ENCODE measurements at regions of chr5 and their contacts with region 1.

Region 1: GRCh38 chr5:147628058-147628895 is 118.4 kb upstream of the DPYSL3 start:
- DNase-seq: no peak
- H3K4me3 ChIP-seq: no peak overlapping the region
- H3K27ac ChIP-seq: no peak overlapping the region
- H3K4me1 ChIP-seq: peaks cover 0 to 4% (median 0%) of the 10 kb centered on the region in 4 donors
- H3K27me3 ChIP-seq: no peaks in the 10 kb centered on the region
- CTCF ChIP-seq: peak; percentile 69 to 78 (median 75)
- EP300 ChIP-seq: no peak
- POLR2A ChIP-seq: no peak

Region 2: GRCh38 chr5:147727200-147727599 is 98.9 kb after region 1 on chr5:
- intact Hi-C with region 1: no loop called
- DNase-seq: no peak
- H3K4me3 ChIP-seq: no peak overlapping the region
- H3K27ac ChIP-seq: no peak overlapping the region
- H3K4me1 ChIP-seq: no peaks in the 10 kb centered on the region
- H3K27me3 ChIP-seq: no peaks in the 10 kb centered on the region
- CTCF ChIP-seq: no peak
- EP300 ChIP-seq: no peak
- POLR2A ChIP-seq: no peak

Region 3: DNA sequence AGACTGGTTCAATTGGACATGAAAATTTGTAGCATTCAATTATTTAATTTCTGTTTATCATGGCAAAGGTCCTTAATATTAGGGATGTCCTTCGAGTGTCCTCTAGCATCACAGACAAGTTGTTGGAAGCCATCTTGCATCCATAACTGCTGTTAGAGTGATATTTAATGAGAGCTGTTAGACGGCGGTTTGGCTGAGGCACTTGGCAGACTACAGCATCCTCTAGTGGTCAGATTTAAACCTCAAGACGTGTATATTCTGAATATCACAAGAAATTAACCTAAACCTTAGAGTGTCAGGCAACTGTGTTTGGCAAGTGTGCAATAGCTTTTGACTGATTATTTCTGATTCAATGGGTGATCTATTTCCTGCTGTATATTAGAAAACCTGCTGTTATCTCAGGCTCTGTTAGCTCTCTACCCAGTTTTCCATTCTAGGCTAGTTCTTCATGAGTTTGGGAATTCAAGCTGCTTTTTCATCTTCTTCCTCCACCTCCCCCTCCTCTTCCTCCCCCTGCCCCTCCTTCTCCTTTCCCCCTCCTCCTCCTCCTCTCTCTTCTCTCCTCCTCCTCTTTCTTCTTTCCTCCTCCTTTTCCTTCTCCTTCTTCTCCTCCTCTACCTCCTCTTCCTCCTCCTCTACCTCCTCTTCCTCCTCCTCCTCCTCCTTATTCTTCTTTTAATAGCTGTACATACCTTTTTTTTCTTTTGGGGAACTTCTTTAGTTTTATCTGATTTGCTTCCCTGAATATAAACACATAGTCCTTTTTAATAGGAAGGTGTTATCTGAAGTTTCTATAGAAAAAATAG is 194.6 kb after region 1 on chr5:
- intact Hi-C with region 1: loop called (anchors 1 kb)
- DNase-seq: no peak
- H3K4me3 ChIP-seq: no peak overlapping the region
- H3K27ac ChIP-seq: no peak overlapping the region
- H3K4me1 ChIP-seq: no peaks in the 10 kb centered on the region
- H3K27me3 ChIP-seq: no peaks in the 10 kb centered on the region
- CTCF ChIP-seq: peak; percentile 81 to 88 (median 87)
- EP300 ChIP-seq: no peak
- POLR2A ChIP-seq: no peak